ENCODE measurements at regions of chr16 and their contacts with region 1.

Region 1: GRCh38 chr16:89183463-89183862 is 11.9 kb downstream of the CDH15 start:
- DNase-seq: no peak
- H3K4me3 Mint-ChIP-seq: no peak overlapping the region
- H3K27ac Mint-ChIP-seq: no peak overlapping the region
- H3K4me1 Mint-ChIP-seq: peaks cover 6% of the 10 kb centered on the region
- H3K27me3 Mint-ChIP-seq: no peaks in the 10 kb centered on the region

Region 2: DNA sequence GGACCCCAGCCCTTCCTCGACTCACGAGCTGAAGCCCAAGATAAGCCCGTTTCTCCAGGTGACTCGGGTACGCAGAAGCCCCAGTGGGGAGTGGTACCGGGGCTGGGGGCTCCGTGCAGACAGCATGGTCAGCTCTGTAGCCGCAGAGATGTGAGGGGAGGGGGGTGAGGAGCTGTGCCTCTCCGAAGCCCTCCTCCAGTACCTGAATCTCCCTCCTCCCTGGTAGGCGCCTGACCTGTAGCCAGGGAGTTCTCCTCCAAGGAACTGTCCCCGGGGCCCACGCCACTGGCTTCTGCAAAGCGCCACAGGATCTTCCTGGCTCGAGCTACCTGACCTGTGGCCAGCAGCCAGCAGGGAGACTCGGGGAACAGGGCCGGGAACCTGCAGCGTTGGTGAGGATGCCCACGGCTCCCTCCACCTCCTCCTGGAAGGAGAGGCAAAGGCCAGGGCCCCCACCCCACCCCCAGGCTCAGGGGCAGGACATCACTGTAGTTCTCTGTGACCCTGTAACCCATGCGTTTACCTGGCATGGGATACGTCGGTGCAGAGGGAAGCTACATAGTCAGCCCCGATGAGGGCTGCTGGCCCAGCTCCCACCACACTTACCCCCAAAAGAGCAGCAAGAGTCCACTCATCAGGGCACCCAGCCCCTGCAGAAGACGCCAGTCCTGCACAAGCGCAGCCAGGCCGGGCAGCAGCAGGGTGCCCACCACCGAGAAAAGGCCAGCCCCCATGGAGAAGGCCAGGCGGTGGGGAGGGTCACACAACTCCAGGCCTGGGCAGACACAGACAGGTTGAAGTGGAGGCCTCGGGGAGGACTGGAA is 15.2 kb after region 1 on chr16:
- CTCF ChIA-PET with region 1: no interaction called
- POLR2A ChIA-PET with region 1: no interaction called
- DNase-seq: no peak
- H3K4me3 Mint-ChIP-seq: no peak overlapping the region
- H3K27ac Mint-ChIP-seq: no peak overlapping the region
- H3K4me1 Mint-ChIP-seq: peaks cover 14% of the 10 kb centered on the region
- H3K27me3 Mint-ChIP-seq: peaks cover 26% of the 10 kb centered on the region

Region 3: GRCh38 chr16:89678258-89678657 is 494.8 kb after region 1 on chr16:
- CTCF ChIA-PET with region 1: no interaction called
- POLR2A ChIA-PET with region 1: interaction called, 10 read pairs
- DNase-seq: no peak
- H3K4me3 Mint-ChIP-seq: no peak overlapping the region
- H3K27ac Mint-ChIP-seq: no peak overlapping the region
- H3K4me1 Mint-ChIP-seq: no peaks in the 10 kb centered on the region
- H3K27me3 Mint-ChIP-seq: no peaks in the 10 kb centered on the region

Measured in activated CD4-positive, alpha-beta T cell treated with anti-CD3 and anti-CD28 coated beads, Interleukin-2, amount 10 ng/mL, durations not matched to agents 7 days and 5 days (primary cell).